Naive thymus-derived CD4-positive, alpha-beta T cell (primary cell): ENCODE measurements at regions of chr2 and their contacts with region 1.

Region 1: DNA sequence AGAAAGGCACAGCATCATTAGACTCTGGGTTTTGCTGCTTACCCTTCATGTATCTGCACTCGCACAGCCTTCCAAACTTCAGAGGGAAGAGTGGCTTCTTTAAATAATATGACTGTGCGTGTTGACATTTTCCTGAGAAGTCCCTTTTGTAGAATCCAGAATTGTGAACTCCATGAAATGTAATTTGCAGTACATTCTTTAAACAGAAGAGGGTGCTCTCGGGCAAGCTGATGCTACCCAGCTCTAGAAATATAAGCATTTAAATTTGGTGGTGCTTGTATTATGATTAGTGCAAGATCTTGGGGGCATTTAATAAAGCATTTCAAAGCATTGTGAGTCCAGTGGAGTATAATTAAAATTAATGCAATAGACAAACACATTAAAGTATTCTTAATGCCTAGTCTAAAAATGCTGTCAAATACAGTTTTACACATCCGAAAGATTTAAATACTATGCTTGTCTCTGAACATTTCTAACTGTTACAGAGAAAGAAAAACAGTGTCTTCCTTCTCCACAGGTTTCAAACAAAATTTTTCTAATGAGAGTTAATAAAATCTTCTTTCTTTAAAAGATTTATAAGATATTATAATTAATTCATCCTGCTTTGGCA is 17.3 kb upstream of the GTF2A1L start:
- DNase-seq: peak in 3 of 9 donors; percentile 5 to 14 (median 12)
- ATAC-seq: no peak
- H3K4me3 ChIP-seq: no peak overlapping the region
- H3K4me3 Mint-ChIP-seq: no peak overlapping the region
- H3K27ac ChIP-seq: no peak overlapping the region
- H3K27ac Mint-ChIP-seq: no peak overlapping the region
- H3K4me1 ChIP-seq: no peaks in the 10 kb centered on the region
- H3K4me1 Mint-ChIP-seq: no peaks in the 10 kb centered on the region
- H3K27me3 ChIP-seq: no peaks in the 10 kb centered on the region
- H3K27me3 Mint-ChIP-seq: peaks cover 0 to 13% (median 5%) of the 10 kb centered on the region in 5 donors

Region 2: DNA sequence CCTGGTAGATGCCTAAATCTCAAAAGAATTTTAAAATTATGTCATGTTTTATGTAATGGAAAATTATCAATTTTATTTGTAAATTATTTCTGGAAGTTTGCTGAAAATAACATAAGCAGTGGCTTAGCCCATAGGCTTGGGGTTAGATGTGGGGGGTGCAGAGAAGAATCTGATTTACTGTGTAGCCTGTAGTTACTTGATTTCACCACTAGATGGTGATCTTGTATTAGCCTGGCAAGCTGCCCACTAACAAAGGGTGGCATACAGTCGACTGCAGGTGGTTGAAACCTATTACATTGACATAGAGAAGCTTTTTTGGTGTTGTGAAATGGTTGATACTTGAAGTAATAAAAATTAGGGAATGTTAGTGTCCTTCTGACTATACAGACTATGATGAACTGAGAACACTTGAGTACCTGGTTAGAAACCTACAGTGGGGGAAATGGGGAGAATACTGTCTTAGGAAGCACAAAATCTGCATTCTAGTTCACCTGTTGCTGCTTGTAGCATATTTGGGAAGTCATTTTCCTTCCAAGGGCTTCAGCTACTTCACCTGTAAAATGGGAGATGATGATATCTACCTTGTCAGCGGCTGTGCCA is 346.2 kb after region 1 on chr2:
- CTCF ChIA-PET with region 1: no interaction called
- POLR2A ChIA-PET with region 1: no interaction called
- intact Hi-C with region 1: loop called in 1 of 2 experiments (anchors 5 kb)
- DNase-seq: peak in 7 of 9 donors; percentile 16 to 49 (median 41)
- ATAC-seq: peak; percentile 86
- H3K4me3 ChIP-seq: no peak overlapping the region
- H3K4me3 Mint-ChIP-seq: no peak overlapping the region
- H3K27ac ChIP-seq: no peak overlapping the region
- H3K27ac Mint-ChIP-seq: no peak overlapping the region
- H3K4me1 ChIP-seq: no peaks in the 10 kb centered on the region
- H3K4me1 Mint-ChIP-seq: no peaks in the 10 kb centered on the region
- H3K27me3 ChIP-seq: no peaks in the 10 kb centered on the region
- H3K27me3 Mint-ChIP-seq: peaks cover 0 to 10% (median 0%) of the 10 kb centered on the region in 5 donors

Region 3: DNA sequence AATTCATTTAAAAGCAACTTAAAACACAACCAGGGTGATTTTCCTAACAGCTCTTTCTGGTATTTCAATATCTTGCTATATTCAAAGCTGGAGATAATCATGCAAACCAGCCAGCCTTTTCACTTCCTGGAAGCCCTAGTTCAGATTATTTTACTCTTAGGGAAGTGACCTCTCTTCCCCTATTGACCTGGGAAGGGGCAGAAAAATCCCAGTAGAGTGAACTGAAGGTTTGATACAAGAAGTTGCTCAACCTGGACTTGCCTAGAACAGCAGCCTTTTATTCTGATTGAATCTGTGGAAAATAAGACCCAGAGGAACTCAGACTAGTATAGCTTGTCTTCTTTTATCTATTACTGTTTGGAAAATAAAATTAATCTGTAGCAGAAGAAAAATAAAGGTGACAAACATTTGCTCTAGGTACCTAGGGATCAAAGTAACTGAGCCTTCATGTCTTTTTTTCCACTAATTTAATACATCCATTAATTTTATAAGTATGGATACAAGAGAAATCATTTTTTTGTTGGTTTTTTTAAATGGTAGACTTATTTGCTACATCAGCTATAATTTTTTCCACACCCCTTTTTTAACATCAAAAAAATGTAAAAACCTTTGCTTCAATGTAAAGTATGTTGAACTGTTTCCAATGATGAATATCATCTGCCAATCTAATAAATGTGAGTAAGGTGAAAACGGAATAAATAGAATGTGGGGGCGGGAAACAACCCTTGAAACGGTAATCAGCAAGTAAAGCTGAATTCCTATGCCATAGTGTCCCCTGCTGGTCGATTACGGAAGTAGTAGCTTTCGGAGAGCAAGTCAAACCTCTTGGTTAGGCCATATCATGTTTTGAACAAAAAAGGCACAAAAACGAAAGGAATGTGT is 1801.7 kb after region 1 on chr2:
- CTCF ChIA-PET with region 1: no interaction called
- POLR2A ChIA-PET with region 1: no interaction called
- intact Hi-C with region 1: loop called in 1 of 2 experiments (anchors 2 kb)
- DNase-seq: peak in 1 of 9 donors; percentile 24
- ATAC-seq: no peak
- H3K4me3 ChIP-seq: no peak overlapping the region
- H3K4me3 Mint-ChIP-seq: no peak overlapping the region
- H3K27ac ChIP-seq: no peak overlapping the region
- H3K27ac Mint-ChIP-seq: no peak overlapping the region
- H3K4me1 ChIP-seq: no peaks in the 10 kb centered on the region
- H3K4me1 Mint-ChIP-seq: no peaks in the 10 kb centered on the region
- H3K27me3 ChIP-seq: no peaks in the 10 kb centered on the region
- H3K27me3 Mint-ChIP-seq: peaks cover 0 to 4% (median 0%) of the 10 kb centered on the region in 5 donors

Region 4: GRCh38 chr2:50492477-50492851 is 1892.2 kb after region 1 on chr2:
- CTCF ChIA-PET with region 1: no interaction called
- POLR2A ChIA-PET with region 1: no interaction called
- intact Hi-C with region 1: loop called in 1 of 2 experiments (anchors 5 kb)
- DNase-seq: peak in 5 of 9 donors; percentile 18 to 36 (median 30)
- ATAC-seq: peak; percentile 74
- H3K4me3 ChIP-seq: no peak overlapping the region
- H3K4me3 Mint-ChIP-seq: peak overlapping the region in 9 of 10 donors; percentile 3 to 57 (median 19)
- H3K27ac ChIP-seq: no peak overlapping the region
- H3K27ac Mint-ChIP-seq: peak overlapping the region in 1 of 9 donors; percentile 13
- H3K4me1 ChIP-seq: no peaks in the 10 kb centered on the region
- H3K4me1 Mint-ChIP-seq: peaks cover 0 to 20% (median 11%) of the 10 kb centered on the region in 7 donors
- H3K27me3 ChIP-seq: no peaks in the 10 kb centered on the region
- H3K27me3 Mint-ChIP-seq: no peaks in the 10 kb centered on the region